ENCODE measurements at regions of chr10 and their contacts with region 1.

Region 1: DNA sequence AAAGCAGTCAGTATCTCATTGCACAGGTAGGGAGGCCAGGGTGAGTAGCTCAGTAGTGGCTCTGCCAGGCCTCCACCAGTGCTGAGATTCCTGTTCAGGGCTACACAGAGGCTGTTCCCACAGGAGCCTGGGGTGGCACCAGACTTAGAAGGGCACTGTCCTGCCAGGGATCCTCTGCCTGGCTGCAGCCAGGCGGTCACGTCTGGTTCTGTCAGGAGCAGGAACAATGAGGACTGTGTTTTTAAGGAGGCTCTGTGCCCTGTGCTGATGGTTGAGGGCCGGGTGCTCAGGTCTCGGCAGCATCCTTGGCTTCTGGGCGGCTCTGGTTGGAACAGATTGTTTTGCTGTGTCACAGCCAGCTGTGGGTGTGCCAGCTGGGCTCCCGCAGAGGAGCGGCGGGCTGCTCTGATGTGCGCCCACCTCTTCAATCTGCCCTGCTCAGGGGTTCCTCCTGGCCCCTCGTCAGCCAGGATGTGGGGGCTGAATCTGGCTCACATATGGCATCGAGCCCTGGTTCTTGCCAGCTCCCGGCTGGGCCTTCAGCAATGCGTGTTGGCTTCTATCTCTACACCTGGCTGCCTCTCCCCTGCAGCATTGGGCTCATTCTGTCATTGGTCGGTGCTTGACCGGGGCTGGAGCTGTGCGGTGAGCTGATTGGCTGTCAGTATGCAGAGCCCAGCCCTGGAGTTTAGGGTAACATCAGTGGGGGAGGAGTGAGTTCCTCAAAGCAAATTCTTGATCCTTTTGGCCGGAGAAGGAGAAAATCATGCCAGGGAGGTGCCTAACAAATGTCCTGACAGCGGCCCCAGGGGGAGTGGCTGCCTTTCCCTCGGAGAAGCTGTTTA is 41.2 kb downstream of the TACR2 start:
- DNase-seq: peak; percentile 83 to 92
- ATAC-seq: peak; percentile 88 to 89
- H3K4me3 ChIP-seq: peak overlapping the region; percentile 21 to 37 (median 29)
- H3K27ac ChIP-seq: peak overlapping the region; percentile 82 to 91 (median 88)
- H3K4me1 ChIP-seq: peaks cover 44 to 60% of the 10 kb centered on the region in 2 donors
- H3K27me3 ChIP-seq: no peaks in the 10 kb centered on the region
- CTCF ChIP-seq: peak in 2 of 5 experiments; percentile 21 to 45
- POLR2A ChIP-seq: peak in 1 of 2 donors; percentile 30

Region 2: DNA sequence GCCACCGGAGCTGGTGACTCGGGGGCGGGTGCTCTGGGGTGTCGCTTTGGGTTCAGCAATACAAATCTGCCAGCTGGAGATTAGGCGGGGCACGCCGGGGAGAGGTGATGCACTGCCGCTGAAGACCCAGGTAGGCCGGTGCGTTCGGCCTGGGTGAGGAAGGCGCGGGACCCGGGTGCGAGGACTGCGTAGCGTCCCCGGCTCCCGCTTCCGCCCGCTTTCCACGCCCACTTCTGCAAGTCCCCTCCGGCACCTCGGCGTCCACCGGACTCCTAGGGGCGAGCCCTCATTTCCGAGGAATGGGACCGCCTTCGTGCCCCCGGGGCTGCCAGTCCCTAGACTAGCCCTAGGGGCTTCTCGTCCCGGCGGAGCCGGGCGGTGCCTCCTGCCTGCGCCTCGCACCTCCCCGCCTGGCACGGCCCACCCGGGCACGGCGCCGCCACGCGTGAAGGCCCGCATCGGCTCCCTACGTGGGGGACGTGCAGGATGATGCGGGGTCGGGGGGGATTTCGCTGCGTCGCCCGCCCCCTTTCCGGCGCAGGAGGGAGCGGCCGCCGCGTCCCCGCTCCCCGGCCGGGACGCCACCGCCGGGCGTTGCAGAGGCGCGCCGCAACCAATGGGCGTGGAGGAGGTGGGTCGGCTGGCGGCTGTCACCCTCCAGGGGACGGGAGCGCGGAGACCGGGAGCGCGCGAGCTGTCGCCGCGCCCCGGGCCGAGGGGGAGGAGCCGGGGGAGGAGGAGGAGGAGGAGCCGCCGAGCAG is 57.2 kb before region 1 on chr10:
- in situ Hi-C with region 1: loop called in 3 of 4 experiments (anchors 10 kb)
- intact Hi-C with region 1: loop called (anchors 2 kb)
- DNase-seq: peak; percentile 88 to 89
- ATAC-seq: peak; percentile 81 to 84
- H3K4me3 ChIP-seq: peak overlapping the region; percentile 92 to 97 (median 96)
- H3K27ac ChIP-seq: peak overlapping the region; percentile 92 to 98 (median 96)
- H3K4me1 ChIP-seq: peaks cover 34 to 41% of the 10 kb centered on the region in 2 donors
- H3K27me3 ChIP-seq: no peaks in the 10 kb centered on the region
- CTCF ChIP-seq: peak in 1 of 5 experiments; percentile 25
- POLR2A ChIP-seq: no peak

Region 3: DNA sequence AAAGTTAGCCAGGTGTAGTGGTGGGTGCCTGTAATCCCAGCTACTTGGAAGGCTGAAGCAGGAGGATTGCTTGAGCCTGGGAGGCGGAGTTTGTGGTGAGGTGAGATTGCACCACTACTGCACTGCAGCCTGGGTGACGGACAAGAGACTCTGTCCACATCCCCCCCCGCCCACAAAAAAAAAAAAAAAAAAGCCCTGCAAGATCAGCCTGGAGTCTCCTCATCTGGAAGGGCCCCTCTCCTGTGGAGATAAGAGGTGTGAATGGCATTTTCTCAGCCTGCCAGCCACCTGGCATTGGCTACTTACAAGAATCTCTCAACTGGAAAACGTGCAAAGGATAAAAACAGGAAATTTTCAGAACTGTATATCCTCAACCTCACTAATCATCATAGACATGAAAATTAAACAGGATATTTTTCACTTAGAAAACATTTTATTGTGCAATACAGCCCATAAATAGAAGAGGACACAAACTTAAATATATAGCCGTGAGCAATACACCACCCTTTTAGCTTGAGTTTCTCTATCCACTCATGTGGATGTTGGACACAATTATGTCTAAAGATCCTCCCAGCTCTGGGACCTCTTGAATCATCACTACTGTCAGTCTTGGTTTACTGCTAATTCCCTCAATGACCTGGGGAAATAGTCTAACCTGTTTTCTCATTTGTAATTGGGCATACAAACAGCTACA is 64.4 kb after region 1 on chr10:
- in situ Hi-C with region 1: no loop called
- intact Hi-C with region 1: no loop called
- DNase-seq: peak in 1 of 2 donors; percentile 73
- ATAC-seq: peak; percentile 79 to 92
- H3K4me3 ChIP-seq: no peak overlapping the region
- H3K27ac ChIP-seq: peak overlapping the region; percentile 77 to 91 (median 85)
- H3K4me1 ChIP-seq: peaks cover 20 to 29% of the 10 kb centered on the region in 2 donors
- H3K27me3 ChIP-seq: no peaks in the 10 kb centered on the region
- CTCF ChIP-seq: no peak
- POLR2A ChIP-seq: no peak

Measured in gastrocnemius medialis (tissue), 4 donors.